Testis (tissue), 5 donors: ENCODE measurements at regions of chr1 and their contacts with region 1.

Region 1: DNA sequence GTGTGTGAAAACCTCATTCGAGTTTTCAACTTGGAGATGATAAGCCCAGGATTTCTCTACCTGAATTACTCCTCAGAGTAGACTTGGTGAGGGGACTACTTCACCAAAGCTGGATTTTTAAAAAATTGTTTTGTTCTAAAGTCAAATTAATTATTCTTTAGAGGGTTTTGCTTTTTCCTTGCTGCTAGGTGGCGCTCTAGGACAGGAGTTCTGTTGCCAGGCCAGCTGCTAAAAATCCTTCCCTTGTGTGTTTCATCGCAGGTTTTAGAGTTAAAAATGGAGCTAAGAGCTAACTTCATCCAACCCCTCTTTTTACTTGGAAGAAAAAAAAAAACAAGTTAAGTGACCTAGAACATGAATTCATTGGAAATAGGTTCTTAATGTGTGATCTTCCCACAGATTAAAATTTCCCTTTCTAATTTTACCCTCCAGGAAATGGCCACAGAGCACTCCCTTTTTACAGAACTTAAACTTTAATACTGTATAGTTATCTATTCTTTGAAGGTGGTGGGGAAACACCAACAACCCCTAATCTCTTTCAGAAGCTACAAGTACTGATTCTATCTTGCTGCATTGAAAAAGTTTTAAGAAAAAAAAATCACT is 36.7 kb upstream of the FAM163A start:
- DNase-seq: peak; percentile 52
- H3K4me3 ChIP-seq: no peak overlapping the region
- H3K27ac ChIP-seq: no peak overlapping the region
- H3K4me1 ChIP-seq: no peaks in the 10 kb centered on the region
- H3K27me3 ChIP-seq: no peaks in the 10 kb centered on the region
- CTCF ChIP-seq: peak; percentile 62 to 84 (median 64)
- POLR2A ChIP-seq: no peak

Region 2: GRCh38 chr1:178599745-178600144 is 1106.7 kb before region 1 on chr1:
- intact Hi-C with region 1: no loop called
- DNase-seq: no peak
- H3K4me3 ChIP-seq: no peak overlapping the region
- H3K27ac ChIP-seq: no peak overlapping the region
- H3K4me1 ChIP-seq: no peaks in the 10 kb centered on the region
- H3K27me3 ChIP-seq: no peaks in the 10 kb centered on the region
- CTCF ChIP-seq: no peak
- POLR2A ChIP-seq: no peak

Region 3: DNA sequence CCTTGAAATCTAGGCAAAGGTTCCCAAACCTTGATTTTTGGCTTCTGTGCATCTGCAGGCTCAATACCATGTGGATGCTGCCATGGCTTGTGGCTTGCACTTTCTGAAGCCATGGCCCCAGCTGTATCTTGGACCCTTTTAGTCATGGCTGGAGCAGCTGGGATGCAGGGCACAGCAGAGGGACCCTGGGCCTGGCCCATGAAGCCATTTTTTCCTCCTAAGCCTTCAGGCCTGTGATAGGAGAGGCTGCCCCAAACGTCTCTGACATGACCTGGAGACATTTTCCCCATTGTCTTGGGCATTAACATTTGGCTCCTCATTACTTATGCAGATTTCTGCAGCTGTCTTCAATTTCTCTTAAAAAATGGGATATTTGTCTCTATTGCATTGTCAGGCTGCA is 228.1 kb before region 1 on chr1:
- intact Hi-C with region 1: no loop called
- DNase-seq: no peak
- H3K4me3 ChIP-seq: no peak overlapping the region
- H3K27ac ChIP-seq: no peak overlapping the region
- H3K4me1 ChIP-seq: no peaks in the 10 kb centered on the region
- H3K27me3 ChIP-seq: no peaks in the 10 kb centered on the region
- CTCF ChIP-seq: no peak
- POLR2A ChIP-seq: no peak

Region 4: DNA sequence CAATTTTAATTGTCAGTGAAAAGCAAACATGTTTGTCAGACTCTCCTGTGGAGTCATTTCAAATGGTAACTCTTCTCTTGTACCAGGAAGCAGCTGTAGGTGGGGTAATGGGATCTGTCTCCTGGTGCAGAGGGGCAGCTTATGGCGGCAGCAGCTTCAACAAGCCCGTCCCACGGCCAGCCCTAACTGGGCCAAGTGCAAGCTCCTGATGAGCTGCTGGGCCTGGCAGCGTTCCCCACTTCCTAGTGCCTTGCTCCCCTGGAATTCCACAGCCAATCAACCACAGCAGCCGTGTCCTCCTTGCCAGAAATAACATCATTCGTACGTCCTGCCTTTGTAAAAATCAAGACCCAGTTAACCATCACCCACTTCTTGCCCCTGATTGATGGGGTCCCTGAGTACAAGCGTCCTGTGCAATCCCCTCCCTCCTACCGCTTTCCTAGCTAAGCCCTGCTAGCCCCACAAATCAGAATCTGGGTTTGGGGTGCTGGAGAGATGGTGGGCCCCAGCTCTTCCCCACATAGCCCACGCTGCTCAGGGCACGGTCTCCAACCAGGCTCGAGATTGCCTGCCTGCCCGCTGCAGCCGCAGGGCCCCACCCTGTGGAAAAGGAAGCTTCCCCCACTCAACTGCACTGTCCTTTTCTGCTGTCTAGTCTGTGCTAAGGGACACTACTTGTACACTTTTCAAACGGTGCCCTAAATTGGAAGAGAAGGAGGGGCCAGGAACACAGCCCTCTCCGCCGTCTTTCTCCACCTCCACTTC is 109.9 kb after region 1 on chr1:
- intact Hi-C with region 1: loop called (anchors 5 kb)
- DNase-seq: peak; percentile 73
- H3K4me3 ChIP-seq: no peak overlapping the region
- H3K27ac ChIP-seq: peak overlapping the region in 1 of 2 donors; percentile 67
- H3K4me1 ChIP-seq: peaks cover 63% of the 10 kb centered on the region
- H3K27me3 ChIP-seq: no peaks in the 10 kb centered on the region
- CTCF ChIP-seq: no peak
- POLR2A ChIP-seq: no peak